ENCODE measurements at regions of chrX and their contacts with region 1.

Region 1: GRCh38 chrX:16826207-16826606 is 39.9 kb downstream of the TXLNG start:
- DNase-seq: no peak

Region 2: DNA sequence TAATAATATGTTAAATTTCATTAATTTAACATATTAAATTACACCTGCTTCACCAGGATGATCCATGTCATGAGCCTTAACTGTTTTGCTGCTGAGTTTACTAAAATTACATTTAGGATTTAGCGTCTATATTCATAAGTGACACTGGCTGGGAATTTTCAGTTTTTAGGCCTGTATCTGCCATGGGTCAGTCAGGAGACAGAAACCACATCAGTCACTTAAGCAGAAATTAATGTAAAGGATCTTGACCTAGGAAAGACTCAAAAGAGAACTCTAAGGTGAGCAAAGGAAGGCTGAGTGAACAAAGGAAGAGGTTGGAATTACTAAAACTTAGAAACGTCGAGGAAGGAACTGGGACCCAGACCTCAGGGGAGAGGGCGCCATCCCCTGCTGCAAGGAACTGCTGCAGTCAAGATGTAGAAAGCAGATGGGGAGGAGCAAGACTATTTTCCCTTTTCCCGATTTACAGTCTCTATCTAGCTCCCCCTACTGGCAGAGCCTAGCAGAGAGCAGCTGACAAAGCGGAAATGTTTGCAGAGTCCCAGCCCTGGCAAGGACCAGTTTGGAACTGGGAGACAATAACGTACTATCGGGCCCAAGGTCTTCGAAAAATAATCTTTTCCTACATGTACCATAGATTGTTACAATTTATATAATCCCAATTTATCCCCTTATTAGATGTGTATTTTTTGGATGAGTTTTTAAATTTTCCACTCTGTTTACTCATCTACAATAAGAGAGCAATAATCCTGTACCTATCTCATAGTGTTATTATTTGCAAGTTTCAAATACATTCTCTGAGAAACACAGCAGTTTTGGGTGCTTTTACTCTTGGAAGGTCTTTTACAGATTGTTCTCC is 66.5 kb after region 1 on chrX:
- intact Hi-C with region 1: loop called (anchors 2 kb)
- DNase-seq: peak in 8 of 10 donors; percentile 36 to 89 (median 56)

Region 3: DNA sequence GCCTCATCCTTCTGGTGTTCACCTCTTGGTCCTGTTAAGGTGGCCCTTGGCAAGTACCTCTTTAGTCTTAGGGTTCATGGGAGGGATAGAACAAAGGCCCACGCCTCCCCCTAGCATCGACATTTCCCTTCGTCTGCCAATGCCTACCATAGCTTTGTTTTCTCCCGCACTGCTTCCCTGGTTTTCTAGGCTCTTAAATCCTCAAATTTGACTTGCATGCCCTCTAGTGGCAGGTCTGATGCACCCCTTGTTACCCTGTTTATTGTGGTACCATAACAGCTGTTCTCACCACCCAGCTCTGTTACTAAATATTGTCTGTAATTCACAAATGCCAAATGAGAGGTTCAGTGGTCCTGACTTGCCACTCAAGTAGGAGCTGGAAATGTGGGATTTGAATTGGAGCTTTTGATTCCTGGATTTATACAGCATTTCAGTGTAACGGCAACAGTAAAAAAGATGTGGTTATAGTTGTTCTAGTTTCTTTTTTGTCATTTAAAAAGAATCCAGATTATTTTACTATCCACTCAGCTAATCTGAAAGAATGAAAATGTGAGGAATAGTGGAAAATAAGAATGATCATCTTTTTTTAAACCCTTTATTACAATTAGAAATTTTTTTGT is 220.4 kb after region 1 on chrX:
- intact Hi-C with region 1: loop called (anchors 10 kb)
- DNase-seq: peak in 6 of 10 donors; percentile 41 to 89 (median 51)

Region 4: GRCh38 chrX:17689971-17690409 is 863.8 kb after region 1 on chrX:
- intact Hi-C with region 1: loop called (anchors 5 kb)
- DNase-seq: peak in 5 of 10 donors; percentile 26 to 70 (median 38)

Measured in posterior cingulate gyrus (tissue), 11 donors.